ENCODE measurements at regions of chr14 and their contacts with region 1.

Region 1: DNA sequence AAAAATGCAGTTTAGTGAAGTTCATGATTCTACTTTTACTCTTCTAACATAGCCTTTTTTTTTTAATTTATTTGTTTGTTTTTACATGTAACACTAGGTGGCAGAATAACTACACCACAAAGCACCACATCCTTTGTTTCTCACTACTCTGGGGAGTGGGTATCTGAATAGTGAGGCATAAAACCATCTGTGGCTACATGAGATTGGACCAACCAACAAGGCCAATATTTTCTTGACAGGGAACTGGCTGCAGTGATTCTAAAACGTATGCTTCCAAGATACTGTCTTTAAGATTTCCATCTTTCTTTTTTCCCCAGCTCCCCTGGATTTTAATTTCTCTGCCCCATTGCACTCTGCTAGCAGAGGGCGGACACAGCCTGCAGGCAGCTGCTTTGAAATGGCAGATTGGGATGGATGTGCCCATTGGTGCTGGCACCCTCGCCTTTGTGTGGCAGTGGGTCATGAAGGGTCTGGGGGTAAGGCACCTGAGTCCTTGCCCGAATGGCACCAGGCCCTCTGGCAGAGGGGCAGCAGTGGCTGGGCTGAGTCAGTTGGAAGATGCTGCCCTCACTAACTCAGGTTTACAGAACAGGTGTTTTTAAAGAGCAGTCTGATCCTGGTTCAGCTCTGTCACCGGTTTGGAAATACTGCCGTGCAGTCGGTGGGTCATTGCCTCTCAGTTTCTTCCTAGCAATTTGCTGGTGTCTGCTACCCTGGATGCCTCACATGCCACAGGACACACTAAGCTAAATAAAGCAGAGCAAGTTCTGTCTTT is 429.1 kb downstream of the RAD51B start:
- DNase-seq: peak; percentile 43 to 65 (median 62)
- H3K4me3 ChIP-seq: no peak overlapping the region
- H3K4me3 Mint-ChIP-seq: no peak overlapping the region
- H3K27ac ChIP-seq: no peak overlapping the region
- H3K27ac Mint-ChIP-seq: peak overlapping the region in 3 of 7 donors; percentile 55 to 61 (median 61)
- H3K4me1 ChIP-seq: peaks cover 24% of the 10 kb centered on the region
- H3K4me1 Mint-ChIP-seq: peaks cover 12 to 38% (median 24%) of the 10 kb centered on the region in 4 donors
- H3K27me3 ChIP-seq: no peaks in the 10 kb centered on the region
- H3K27me3 Mint-ChIP-seq: no peaks in the 10 kb centered on the region

Region 2: GRCh38 chr14:67934008-67934481 is 314.6 kb before region 1 on chr14:
- CTCF ChIA-PET with region 1: interaction called, 7 read pairs
- POLR2A ChIA-PET with region 1: no interaction called
- intact Hi-C with region 1: loop called (anchors 10 kb)
- DNase-seq: peak in 4 of 5 donors; percentile 37 to 51 (median 46)
- H3K4me3 ChIP-seq: no peak overlapping the region
- H3K4me3 Mint-ChIP-seq: no peak overlapping the region
- H3K27ac ChIP-seq: no peak overlapping the region
- H3K27ac Mint-ChIP-seq: peak overlapping the region in 5 of 7 donors; percentile 9 to 94 (median 77)
- H3K4me1 ChIP-seq: peaks cover 7% of the 10 kb centered on the region
- H3K4me1 Mint-ChIP-seq: peaks cover 5 to 6% (median 5%) of the 10 kb centered on the region in 4 donors
- H3K27me3 ChIP-seq: no peaks in the 10 kb centered on the region
- H3K27me3 Mint-ChIP-seq: no peaks in the 10 kb centered on the region

Region 3: DNA sequence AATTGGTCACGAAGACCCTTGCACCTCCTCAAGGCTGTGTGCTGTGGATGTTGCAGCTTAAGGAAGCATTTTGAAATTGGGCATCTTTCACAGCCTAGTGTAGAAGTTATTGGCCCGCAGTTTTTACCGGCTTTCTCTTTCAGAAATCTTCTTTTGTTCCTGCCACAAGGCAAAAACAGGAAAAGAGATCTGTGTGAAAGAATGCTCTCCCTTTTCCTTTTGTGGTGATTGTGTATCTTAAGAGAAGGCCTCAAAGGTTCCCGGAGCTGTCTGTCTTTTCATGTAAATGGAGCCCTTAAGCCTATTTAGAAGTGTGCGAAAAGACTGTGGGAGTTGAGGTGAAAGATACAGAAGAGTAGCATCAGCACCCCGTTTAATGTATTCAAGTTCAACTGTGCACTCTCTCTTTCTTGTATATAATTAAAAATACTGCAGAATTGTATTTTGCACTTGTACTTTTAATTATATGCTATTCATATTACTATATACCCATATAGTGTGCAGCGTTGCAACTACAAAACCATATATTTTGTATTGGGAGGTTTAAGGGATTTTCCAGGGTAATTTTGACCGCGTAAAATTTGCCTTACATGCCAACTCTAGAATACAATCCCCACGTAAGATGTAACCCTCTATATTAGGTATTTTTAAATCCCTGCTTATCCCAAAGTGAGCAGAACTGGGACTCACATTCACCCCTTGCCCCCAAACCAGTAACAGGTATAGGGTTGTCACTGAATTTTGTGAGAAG is 12.6 kb after region 1 on chr14:
- CTCF ChIA-PET with region 1: interaction called, 19 read pairs
- POLR2A ChIA-PET with region 1: interaction called, 3 read pairs
- intact Hi-C with region 1: no loop called
- DNase-seq: no peak
- H3K4me3 ChIP-seq: peak overlapping the region in 1 of 2 donors; percentile 10
- H3K4me3 Mint-ChIP-seq: peak overlapping the region; percentile 46 to 82 (median 64)
- H3K27ac ChIP-seq: peak overlapping the region; percentile 37
- H3K27ac Mint-ChIP-seq: peak overlapping the region; percentile 87 to 96 (median 93)
- H3K4me1 ChIP-seq: peaks cover 49% of the 10 kb centered on the region
- H3K4me1 Mint-ChIP-seq: peaks cover 26 to 57% (median 46%) of the 10 kb centered on the region in 4 donors
- H3K27me3 ChIP-seq: no peaks in the 10 kb centered on the region
- H3K27me3 Mint-ChIP-seq: no peaks in the 10 kb centered on the region

Region 4: DNA sequence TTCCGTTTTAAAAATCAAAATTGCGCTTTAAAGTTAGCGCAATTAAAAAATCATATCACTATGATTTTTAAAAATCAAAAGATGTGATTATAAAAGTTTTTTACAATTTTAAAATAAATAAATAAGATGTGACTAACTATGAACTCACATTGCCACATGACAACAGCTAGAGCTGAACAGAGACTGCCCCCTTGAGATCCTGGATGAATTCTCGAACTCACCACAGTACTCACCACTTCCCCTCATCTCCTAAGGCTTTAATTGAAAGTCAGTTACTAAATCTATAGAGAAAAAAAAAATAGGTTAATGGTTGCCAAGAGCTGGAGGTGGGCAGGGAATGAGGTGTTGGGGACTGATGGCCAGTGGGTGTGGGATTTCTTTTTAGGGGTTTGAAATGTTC is 160.0 kb after region 1 on chr14:
- CTCF ChIA-PET with region 1: interaction called, 28 read pairs
- POLR2A ChIA-PET with region 1: interaction called, 5 read pairs
- intact Hi-C with region 1: loop called (anchors 2 kb)
- DNase-seq: peak in 4 of 5 donors; percentile 7 to 28 (median 18)
- H3K4me3 ChIP-seq: no peak overlapping the region
- H3K4me3 Mint-ChIP-seq: peak overlapping the region in 2 of 8 donors; percentile 9 to 14
- H3K27ac ChIP-seq: no peak overlapping the region
- H3K27ac Mint-ChIP-seq: peak overlapping the region in 1 of 7 donors; percentile 10
- H3K4me1 ChIP-seq: peaks cover 26% of the 10 kb centered on the region
- H3K4me1 Mint-ChIP-seq: peaks cover 27 to 39% (median 31%) of the 10 kb centered on the region in 4 donors
- H3K27me3 ChIP-seq: no peaks in the 10 kb centered on the region
- H3K27me3 Mint-ChIP-seq: no peaks in the 10 kb centered on the region

Region 5: GRCh38 chr14:68704736-68705705 is 456.4 kb after region 1 on chr14:
- CTCF ChIA-PET with region 1: no interaction called
- POLR2A ChIA-PET with region 1: no interaction called
- intact Hi-C with region 1: no loop called
- DNase-seq: no peak
- H3K4me3 ChIP-seq: no peak overlapping the region
- H3K4me3 Mint-ChIP-seq: no peak overlapping the region
- H3K27ac ChIP-seq: no peak overlapping the region
- H3K27ac Mint-ChIP-seq: peak overlapping the region in 5 of 7 donors; percentile 9 to 78 (median 54)
- H3K4me1 ChIP-seq: peaks cover 8% of the 10 kb centered on the region
- H3K4me1 Mint-ChIP-seq: peaks cover 0 to 5% (median 0%) of the 10 kb centered on the region in 4 donors
- H3K27me3 ChIP-seq: no peaks in the 10 kb centered on the region
- H3K27me3 Mint-ChIP-seq: no peaks in the 10 kb centered on the region

Region 6: GRCh38 chr14:69107407-69108003 is 858.8 kb after region 1 on chr14:
- CTCF ChIA-PET with region 1: no interaction called
- POLR2A ChIA-PET with region 1: no interaction called
- intact Hi-C with region 1: loop called (anchors 10 kb)
- DNase-seq: peak in 4 of 5 donors; percentile 40 to 51 (median 47)
- H3K4me3 ChIP-seq: no peak overlapping the region
- H3K4me3 Mint-ChIP-seq: no peak overlapping the region
- H3K27ac ChIP-seq: no peak overlapping the region
- H3K27ac Mint-ChIP-seq: no peak overlapping the region
- H3K4me1 ChIP-seq: no peaks in the 10 kb centered on the region
- H3K4me1 Mint-ChIP-seq: peaks cover 0 to 5% (median 2%) of the 10 kb centered on the region in 4 donors
- H3K27me3 ChIP-seq: no peaks in the 10 kb centered on the region
- H3K27me3 Mint-ChIP-seq: no peaks in the 10 kb centered on the region